Adrenal gland (tissue), 19 donors: ENCODE measurements at regions of chr5 and their contacts with region 1.

Region 1: GRCh38 chr5:137743031-137743640 is 7.2 kb upstream of the KLHL3 start:
- DNase-seq: peak; percentile 54 to 77 (median 68)
- H3K4me3 ChIP-seq: no peak overlapping the region
- H3K27ac ChIP-seq: no peak overlapping the region
- H3K4me1 ChIP-seq: peaks cover 2 to 9% of the 10 kb centered on the region in 2 donors
- H3K27me3 ChIP-seq: no peaks in the 10 kb centered on the region
- CTCF ChIP-seq: peak; percentile 59 to 71 (median 70)
- POLR2A ChIP-seq: no peak

Region 2: GRCh38 chr5:137629646-137630045 is 113.5 kb before region 1 on chr5:
- intact Hi-C with region 1: loop called (anchors 5 kb)
- DNase-seq: peak in 4 of 7 donors; percentile 30 to 46 (median 35)
- H3K4me3 ChIP-seq: no peak overlapping the region
- H3K27ac ChIP-seq: no peak overlapping the region
- H3K4me1 ChIP-seq: peaks cover 17 to 19% of the 10 kb centered on the region in 2 donors
- H3K27me3 ChIP-seq: no peaks in the 10 kb centered on the region
- CTCF ChIP-seq: peak; percentile 93 to 98 (median 95)
- POLR2A ChIP-seq: no peak

Region 3: DNA sequence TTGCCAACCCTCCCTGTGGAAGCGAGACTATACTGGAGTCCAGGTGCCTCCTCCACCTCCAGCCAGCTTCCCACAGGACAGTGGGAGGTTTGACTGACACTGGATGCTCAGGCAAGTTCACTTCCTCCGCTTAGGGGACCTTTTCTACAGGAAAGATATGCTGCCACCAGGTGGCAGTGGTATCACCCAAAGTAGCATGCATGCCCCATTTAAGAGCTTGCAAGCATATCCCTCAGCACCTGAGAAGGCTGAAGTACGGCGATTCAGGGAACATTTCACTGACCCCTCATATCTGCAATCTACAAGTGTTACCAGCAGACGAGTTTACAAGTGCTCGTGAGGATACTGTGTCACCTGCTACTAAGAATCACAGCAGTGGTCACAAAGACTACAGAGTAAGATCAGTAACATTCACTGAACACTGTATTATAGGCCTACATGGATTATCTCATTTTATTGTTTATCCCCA is 82.8 kb before region 1 on chr5:
- intact Hi-C with region 1: loop called (anchors 5 kb)
- DNase-seq: peak; percentile 70 to 93 (median 81)
- H3K4me3 ChIP-seq: no peak overlapping the region
- H3K27ac ChIP-seq: no peak overlapping the region
- H3K4me1 ChIP-seq: peaks cover 0 to 3% of the 10 kb centered on the region in 2 donors
- H3K27me3 ChIP-seq: no peaks in the 10 kb centered on the region
- CTCF ChIP-seq: peak; percentile 74 to 81 (median 77)
- POLR2A ChIP-seq: no peak

Region 4: DNA sequence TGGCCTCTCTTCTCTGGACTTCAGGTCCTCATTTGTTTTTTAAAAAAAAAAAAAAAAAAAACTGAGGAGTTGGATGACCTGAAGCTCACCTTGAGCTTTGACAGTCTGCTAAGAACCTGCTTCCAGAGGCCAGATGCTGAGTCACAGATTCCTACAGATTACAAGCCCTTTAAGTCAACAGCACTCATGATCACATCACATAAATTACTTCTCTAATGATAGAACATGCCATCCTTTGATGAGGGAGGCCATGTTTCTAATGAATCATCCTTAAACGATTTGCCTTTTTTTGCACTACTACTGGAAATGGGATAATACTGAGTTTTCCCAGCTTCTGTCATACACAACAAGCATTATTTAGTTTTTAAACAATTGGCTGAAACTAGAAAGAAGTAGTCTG is 90.3 kb after region 1 on chr5:
- intact Hi-C with region 1: no loop called
- DNase-seq: peak; percentile 64 to 87 (median 80)
- H3K4me3 ChIP-seq: no peak overlapping the region
- H3K27ac ChIP-seq: peak overlapping the region; percentile 14 to 72 (median 39)
- H3K4me1 ChIP-seq: peaks cover 25 to 60% of the 10 kb centered on the region in 2 donors
- H3K27me3 ChIP-seq: no peaks in the 10 kb centered on the region
- CTCF ChIP-seq: no peak
- POLR2A ChIP-seq: no peak